ENCODE measurements at regions of chr16 and their contacts with region 1.

Region 1: GRCh38 chr16:11255737-11256660 is at the start of gene SOCS1:
- DNase-seq: peak; percentile 92
- ATAC-seq: peak; percentile 70
- H3K4me3 ChIP-seq: peak within 1 kb of the TSS; percentile 65 to 90 (median 72)
- H3K4me3 Mint-ChIP-seq: peak within 1 kb of the TSS; percentile 99
- H3K27ac ChIP-seq: peak within 1 kb of the TSS; percentile 86 to 90
- H3K27ac Mint-ChIP-seq: peak within 1 kb of the TSS; percentile 99
- H3K4me1 ChIP-seq: peaks cover 50 to 62% of the 10 kb centered on the region in 2 donors
- H3K4me1 Mint-ChIP-seq: peaks cover 53% of the 10 kb centered on the region
- H3K27me3 ChIP-seq: no peaks in the 10 kb centered on the region
- H3K27me3 Mint-ChIP-seq: no peaks in the 10 kb centered on the region
- CTCF ChIP-seq: peak; percentile 86
- total RNA-seq, gene SOCS1: 107 TPM in 2 replicates

Region 2: DNA sequence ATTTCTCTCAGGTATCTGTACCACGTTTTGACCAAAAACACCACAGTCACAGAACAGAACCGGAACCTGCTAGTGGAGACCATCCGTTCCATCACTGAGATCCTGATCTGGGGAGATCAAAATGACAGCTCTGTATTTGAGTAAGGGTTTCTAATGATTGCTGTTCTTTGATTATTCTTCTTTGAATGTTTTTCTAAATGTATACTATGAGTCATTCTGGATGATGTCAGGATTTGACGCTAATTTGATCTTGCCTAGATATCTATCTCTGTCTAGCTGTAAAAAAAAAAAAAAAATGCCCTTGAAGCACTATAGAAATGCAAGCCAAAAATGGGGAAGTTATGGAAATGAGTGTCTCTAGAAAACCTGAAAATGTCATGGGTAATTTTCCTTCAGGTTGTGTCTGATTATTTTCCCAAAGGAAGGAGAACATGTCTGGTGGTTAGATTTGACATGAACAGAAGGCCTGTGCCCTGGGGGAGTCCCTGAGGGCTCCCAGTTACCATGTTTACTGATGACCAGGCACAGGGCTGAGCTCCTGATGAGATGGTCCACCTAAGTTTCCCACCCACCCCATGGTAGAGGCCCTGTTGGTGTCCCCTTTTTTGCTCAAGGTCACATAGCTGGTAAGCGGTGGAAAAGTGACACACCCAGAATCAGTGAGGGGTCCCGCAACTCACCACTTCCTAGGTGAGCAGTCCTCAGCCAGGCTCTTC is 298.1 kb before region 1 on chr16:
- CTCF ChIA-PET with region 1: interaction called, 94 read pairs
- POLR2A ChIA-PET with region 1: interaction called, 32 read pairs
- intact Hi-C with region 1: no loop called
- DNase-seq: peak; percentile 31
- ATAC-seq: peak; percentile 63
- H3K4me3 ChIP-seq: no peak overlapping the region
- H3K4me3 Mint-ChIP-seq: peak overlapping the region; percentile 53
- H3K27ac ChIP-seq: peak overlapping the region in 1 of 2 donors; percentile 22
- H3K27ac Mint-ChIP-seq: peak overlapping the region; percentile 62
- H3K4me1 ChIP-seq: peaks cover 21 to 30% of the 10 kb centered on the region in 2 donors
- H3K4me1 Mint-ChIP-seq: peaks cover 49% of the 10 kb centered on the region
- H3K27me3 ChIP-seq: no peaks in the 10 kb centered on the region
- H3K27me3 Mint-ChIP-seq: no peaks in the 10 kb centered on the region
- CTCF ChIP-seq: no peak

Region 3: DNA sequence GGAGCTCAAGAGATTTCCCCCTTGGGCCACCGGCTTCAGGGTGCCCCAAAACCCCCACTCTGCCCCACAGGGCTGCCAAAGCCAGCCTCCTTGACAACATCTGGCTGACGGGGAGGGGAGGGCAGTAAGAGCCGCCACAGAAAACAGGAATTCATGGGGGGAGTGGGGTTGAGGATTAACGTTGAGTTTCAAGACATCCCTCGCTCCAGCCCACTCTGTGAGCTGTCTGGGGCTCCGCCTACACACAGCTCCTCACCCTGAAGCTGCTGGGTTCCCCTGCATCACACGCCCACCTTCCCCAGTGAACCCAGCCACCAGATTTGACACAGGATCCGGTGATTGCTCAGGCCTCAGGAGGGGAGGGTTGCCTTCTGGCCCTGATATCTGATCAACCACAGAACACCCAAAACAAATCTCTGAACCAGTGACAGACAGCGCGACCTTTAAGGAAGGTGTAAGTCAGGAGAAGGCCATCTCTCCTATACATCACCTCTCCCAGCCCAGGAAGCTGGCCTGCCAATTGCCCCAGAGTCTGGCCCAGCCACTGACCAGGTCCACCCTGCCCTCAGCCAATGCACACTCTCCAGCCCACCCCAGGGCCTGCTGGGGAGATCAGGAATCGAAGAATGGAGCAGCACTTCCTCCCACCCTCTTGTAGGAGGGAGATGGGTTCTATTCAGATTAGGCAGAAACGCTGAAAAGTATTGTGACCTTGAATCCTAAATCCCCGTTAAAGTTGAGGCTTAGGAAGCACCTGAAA is 179.6 kb before region 1 on chr16:
- CTCF ChIA-PET with region 1: interaction called, 9 read pairs
- POLR2A ChIA-PET with region 1: interaction called, 8 read pairs
- intact Hi-C with region 1: loop called (anchors 5 kb)
- DNase-seq: peak; percentile 44
- ATAC-seq: peak; percentile 70
- H3K4me3 ChIP-seq: no peak overlapping the region
- H3K4me3 Mint-ChIP-seq: peak overlapping the region; percentile 81
- H3K27ac ChIP-seq: peak overlapping the region; percentile 63 to 64
- H3K27ac Mint-ChIP-seq: peak overlapping the region; percentile 97
- H3K4me1 ChIP-seq: peaks cover 53 to 57% of the 10 kb centered on the region in 2 donors
- H3K4me1 Mint-ChIP-seq: peaks cover 77% of the 10 kb centered on the region
- H3K27me3 ChIP-seq: no peaks in the 10 kb centered on the region
- H3K27me3 Mint-ChIP-seq: no peaks in the 10 kb centered on the region
- CTCF ChIP-seq: no peak

Region 4: DNA sequence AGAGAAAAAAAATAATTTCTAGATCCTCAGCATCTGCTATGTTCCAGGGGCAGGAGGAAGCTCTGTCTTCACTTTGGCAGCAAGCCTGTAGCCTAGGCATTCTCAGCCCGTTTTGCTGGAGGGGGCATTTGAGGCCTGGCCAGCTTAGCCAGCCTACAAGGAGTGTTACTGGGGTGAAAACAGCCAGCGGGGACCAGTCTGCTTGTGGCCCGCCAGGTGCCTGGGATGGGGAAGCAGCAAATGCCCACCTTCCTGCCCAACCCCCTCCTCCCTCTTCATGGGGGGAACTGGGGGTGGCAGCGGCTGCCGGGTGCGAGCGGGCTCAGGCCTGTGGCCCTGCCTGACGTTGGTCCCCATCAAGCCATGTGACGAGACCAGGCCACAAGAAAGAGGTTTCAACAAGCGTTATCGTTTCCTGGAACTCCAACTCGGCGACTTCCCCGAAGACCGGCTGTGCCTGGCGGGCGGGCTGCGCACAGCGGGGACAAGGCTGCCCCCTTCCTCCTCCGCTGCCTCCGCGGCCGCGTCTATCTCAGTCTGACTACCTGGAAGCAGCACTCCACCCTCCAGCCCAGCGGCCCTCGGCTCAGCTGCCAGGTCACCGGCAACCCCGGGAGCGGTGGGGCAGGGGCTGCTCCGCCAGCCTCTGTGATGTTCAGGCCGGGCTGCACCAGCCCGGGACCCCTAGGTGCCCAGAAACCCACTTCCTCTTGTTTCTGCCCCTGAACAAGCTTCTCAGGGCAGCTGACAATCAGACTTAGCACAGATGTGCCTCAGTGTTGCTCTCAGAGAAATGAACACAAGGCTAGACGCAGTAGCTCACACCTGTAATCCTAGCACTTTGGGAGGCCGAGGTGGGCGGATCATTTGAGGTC is 22.9 kb before region 1 on chr16:
- CTCF ChIA-PET with region 1: interaction called, 9 read pairs
- POLR2A ChIA-PET with region 1: interaction called, 3 read pairs
- intact Hi-C with region 1: loop called (anchors 2 kb)
- DNase-seq: peak; percentile 76
- ATAC-seq: peak; percentile 73
- H3K4me3 ChIP-seq: peak overlapping the region in 4 of 5 experiments; percentile 17 to 56 (median 42)
- H3K4me3 Mint-ChIP-seq: peak overlapping the region; percentile 71
- H3K27ac ChIP-seq: peak overlapping the region in 1 of 2 donors; percentile 37
- H3K27ac Mint-ChIP-seq: peak overlapping the region; percentile 68
- H3K4me1 ChIP-seq: peaks cover 16 to 19% of the 10 kb centered on the region in 2 donors
- H3K4me1 Mint-ChIP-seq: peaks cover 34% of the 10 kb centered on the region
- H3K27me3 ChIP-seq: no peaks in the 10 kb centered on the region
- H3K27me3 Mint-ChIP-seq: no peaks in the 10 kb centered on the region
- CTCF ChIP-seq: no peak

Region 5: GRCh38 chr16:11328172-11329070 is 72.4 kb after region 1 on chr16:
- CTCF ChIA-PET with region 1: interaction called, 52 read pairs
- POLR2A ChIA-PET with region 1: interaction called, 51 read pairs
- intact Hi-C with region 1: loop called (anchors 1 kb)
- DNase-seq: peak; percentile 90
- ATAC-seq: peak; percentile 70
- H3K4me3 ChIP-seq: peak overlapping the region in 4 of 5 experiments; percentile 30 to 64 (median 36)
- H3K4me3 Mint-ChIP-seq: peak overlapping the region; percentile 81
- H3K27ac ChIP-seq: peak overlapping the region; percentile 91 to 94
- H3K27ac Mint-ChIP-seq: peak overlapping the region; percentile 93
- H3K4me1 ChIP-seq: peaks cover 59 to 69% of the 10 kb centered on the region in 2 donors
- H3K4me1 Mint-ChIP-seq: peaks cover 62% of the 10 kb centered on the region
- H3K27me3 ChIP-seq: no peaks in the 10 kb centered on the region
- H3K27me3 Mint-ChIP-seq: no peaks in the 10 kb centered on the region
- CTCF ChIP-seq: no peak

Region 6: DNA sequence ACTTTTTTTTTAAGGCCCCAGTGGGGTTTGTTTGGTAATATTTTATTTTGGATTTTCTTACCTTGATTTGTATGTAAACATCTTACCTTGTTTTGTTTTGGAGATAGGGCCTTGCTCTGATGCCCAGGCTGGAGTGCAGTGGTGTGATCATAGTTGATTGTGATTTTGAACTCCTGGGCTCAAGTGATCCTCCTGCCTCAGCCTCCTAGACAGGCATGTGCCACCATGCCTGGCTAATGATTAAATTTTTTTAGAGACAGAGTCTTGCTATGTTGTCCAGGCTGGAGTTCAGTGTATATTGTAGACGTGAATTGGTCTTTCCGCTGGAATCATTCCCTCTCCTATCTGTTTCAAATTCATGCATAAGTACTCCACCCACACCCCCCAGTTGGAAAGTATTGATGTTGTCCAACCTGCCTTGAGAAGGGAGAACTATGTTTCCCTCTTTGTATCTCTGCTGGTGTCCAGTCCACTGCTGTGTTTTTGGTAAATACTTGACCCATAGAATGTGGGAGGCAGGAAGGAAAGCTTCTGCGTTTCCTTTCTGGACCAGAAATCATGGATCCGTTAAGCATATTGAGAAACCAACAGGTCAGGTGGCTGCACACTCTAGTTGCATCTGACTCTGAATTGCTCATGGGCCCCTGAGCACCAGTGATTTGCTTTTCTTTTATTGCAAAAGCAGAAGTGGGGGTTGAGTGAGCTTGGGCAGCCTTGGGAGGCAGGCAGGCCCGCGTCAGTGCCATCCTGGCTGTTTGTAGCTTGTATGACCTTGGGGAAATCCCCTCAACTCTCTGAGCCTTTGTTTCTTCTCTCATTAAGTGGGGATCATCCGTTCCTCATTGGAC is 114.3 kb after region 1 on chr16:
- CTCF ChIA-PET with region 1: interaction called, 42 read pairs
- POLR2A ChIA-PET with region 1: interaction called, 6 read pairs
- intact Hi-C with region 1: no loop called
- DNase-seq: peak; percentile 93
- ATAC-seq: peak; percentile 98
- H3K4me3 ChIP-seq: no peak overlapping the region
- H3K4me3 Mint-ChIP-seq: peak overlapping the region; percentile 62
- H3K27ac ChIP-seq: peak overlapping the region; percentile 44 to 56
- H3K27ac Mint-ChIP-seq: peak overlapping the region; percentile 71
- H3K4me1 ChIP-seq: peaks cover 23 to 26% of the 10 kb centered on the region in 2 donors
- H3K4me1 Mint-ChIP-seq: peaks cover 35% of the 10 kb centered on the region
- H3K27me3 ChIP-seq: no peaks in the 10 kb centered on the region
- H3K27me3 Mint-ChIP-seq: no peaks in the 10 kb centered on the region
- CTCF ChIP-seq: no peak

Region 7: DNA sequence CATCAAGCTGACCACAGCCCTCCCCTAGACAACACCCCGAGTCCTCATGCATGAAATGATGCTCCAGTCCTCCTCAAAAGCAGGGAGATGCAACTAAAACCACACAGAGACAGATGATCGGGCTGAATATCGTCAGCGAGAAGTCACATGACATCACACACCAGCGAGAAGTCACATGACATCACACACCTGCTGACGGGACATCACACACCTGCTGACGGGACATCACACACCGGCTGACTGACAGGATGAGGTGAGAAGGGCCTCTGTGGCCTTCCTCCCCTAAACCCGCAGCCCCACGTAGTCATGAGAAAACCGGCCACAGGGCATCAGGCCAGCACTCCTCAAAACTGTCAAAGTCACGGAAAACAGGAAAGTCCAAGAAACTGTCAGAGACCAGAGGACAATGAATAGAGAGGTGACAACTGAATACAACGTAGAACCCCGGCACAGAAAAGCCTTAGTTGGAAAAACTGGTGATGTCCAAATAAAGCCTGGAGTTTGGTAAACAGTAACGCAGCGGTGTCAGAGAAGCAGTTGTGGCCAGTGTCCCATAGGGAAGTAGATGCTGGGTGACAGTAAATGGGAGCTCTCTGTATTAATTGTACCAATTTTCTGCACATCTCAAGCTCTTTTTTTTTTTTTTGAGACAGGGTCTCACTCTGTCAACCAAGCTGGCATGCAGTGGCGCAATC is 316.4 kb after region 1 on chr16:
- CTCF ChIA-PET with region 1: no interaction called
- POLR2A ChIA-PET with region 1: no interaction called
- intact Hi-C with region 1: no loop called
- DNase-seq: peak; percentile 85
- ATAC-seq: peak; percentile 44
- H3K4me3 ChIP-seq: no peak overlapping the region
- H3K4me3 Mint-ChIP-seq: peak overlapping the region; percentile 61
- H3K27ac ChIP-seq: peak overlapping the region; percentile 23 to 66
- H3K27ac Mint-ChIP-seq: peak overlapping the region; percentile 90
- H3K4me1 ChIP-seq: peaks cover 52 to 72% of the 10 kb centered on the region in 2 donors
- H3K4me1 Mint-ChIP-seq: peaks cover 70% of the 10 kb centered on the region
- H3K27me3 ChIP-seq: no peaks in the 10 kb centered on the region
- H3K27me3 Mint-ChIP-seq: no peaks in the 10 kb centered on the region
- CTCF ChIP-seq: no peak

Measured in B cell (primary cell).